ENCODE measurements at regions of chr4 and their contacts with region 1.

Region 1: DNA sequence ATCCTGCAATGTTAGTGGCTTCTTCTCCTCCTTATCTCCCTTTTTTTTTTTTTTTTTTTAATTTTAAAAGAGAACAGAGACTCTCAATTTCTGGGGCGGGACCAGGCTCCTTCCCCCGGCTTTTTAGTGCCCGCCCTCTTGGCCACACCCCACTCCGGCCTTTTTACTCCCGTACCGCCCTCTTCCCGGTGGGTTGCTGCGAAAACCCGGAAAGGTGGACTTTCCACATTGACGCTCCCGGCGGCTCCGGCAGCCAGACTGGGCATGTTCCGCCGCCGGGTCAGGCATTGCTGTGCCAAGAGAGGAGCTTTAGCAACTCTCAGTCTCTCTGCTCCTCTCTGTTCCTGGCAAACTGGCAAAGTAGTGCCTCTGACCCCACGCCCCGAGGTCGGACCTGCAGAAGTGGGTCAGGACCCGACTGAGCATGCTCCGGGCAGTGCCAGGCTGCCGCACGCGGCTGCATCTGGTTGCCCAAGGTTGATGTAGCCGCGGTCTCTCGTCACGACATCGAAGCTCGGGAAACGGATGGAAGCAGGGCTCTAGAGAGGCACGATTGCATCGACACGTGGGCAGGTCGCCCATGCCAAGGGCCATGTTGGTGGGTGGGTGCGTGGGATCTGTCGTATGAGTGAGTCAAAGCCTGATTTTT is 1.1 kb upstream of the MFAP3L start:
- DNase-seq: peak; percentile 94
- ATAC-seq: peak; percentile 77
- H3K4me3 Mint-ChIP-seq: peak overlapping the region; percentile 71
- H3K27ac Mint-ChIP-seq: peak overlapping the region; percentile 69
- H3K4me1 Mint-ChIP-seq: peaks cover 10% of the 10 kb centered on the region
- H3K27me3 Mint-ChIP-seq: peaks cover 15% of the 10 kb centered on the region

Region 2: DNA sequence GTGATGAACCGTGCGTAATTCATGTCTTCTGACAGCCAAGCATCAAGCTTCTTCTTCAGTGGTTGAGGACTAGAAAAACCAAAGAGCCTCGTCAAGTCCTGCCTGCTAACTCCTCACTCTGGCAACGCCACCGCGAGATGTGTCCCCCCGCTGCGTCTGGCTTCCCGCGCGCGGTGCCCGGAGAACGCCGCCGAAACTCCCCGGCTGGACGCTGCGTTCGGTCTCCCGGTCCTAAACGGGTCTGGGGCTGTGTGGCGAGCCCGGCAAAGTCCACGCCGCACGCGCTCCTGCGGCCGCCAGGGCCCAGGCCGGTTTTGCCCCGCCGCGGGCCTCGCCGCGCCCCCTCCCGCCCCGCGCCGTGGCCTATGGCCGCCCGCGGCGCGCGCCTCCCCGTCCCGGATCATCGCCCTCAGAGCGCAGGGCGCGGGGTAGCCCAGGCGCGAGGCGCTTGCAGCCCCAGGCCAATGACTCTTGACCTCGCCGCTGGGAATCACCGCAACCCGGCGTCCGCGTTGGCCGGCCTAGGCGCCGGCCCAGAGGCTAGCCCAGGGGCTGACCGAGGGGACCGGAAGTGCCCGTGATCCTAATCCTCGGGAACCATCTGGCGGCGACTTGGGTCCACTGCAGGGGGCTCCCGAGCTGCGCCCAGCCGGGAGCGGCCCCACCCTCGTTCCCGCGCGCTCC is 62.5 kb after region 1 on chr4 and contains the start of gene AADAT:
- CTCF ChIA-PET with region 1: no interaction called
- POLR2A ChIA-PET with region 1: no interaction called
- intact Hi-C with region 1: loop called in 1 of 2 experiments (anchors 2 kb)
- DNase-seq: peak; percentile 60
- ATAC-seq: peak; percentile 85
- H3K4me3 Mint-ChIP-seq: peak within 1 kb of the TSS; percentile 58
- H3K27ac Mint-ChIP-seq: no peak within 1 kb of the TSS
- H3K4me1 Mint-ChIP-seq: peaks cover 9% of the 10 kb centered on the region
- H3K27me3 Mint-ChIP-seq: peaks cover 35% of the 10 kb centered on the region
- total RNA-seq, gene AADAT: not detected

Region 3: DNA sequence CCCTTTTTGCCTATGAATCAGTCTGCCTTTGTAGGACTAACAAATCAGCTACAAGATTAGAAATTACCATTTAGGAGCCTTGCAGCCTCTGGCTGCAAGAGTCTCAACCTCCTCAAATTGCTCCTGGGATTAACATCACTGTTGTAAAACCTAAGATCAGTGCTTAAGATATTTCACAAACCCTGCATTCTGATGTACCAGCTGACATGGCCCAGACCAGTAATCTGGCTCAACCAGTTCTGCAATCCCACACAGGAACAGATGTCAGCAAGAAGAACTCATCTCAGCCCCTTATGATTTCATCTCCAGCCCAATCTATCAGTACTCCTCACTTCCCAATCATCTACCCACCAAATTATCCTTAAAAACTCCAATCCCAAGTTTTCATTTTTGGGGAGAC is 94.9 kb after region 1 on chr4:
- CTCF ChIA-PET with region 1: no interaction called
- POLR2A ChIA-PET with region 1: no interaction called
- intact Hi-C with region 1: no loop called
- DNase-seq: no peak
- ATAC-seq: no peak
- H3K4me3 Mint-ChIP-seq: no peak overlapping the region
- H3K27ac Mint-ChIP-seq: no peak overlapping the region
- H3K4me1 Mint-ChIP-seq: no peaks in the 10 kb centered on the region
- H3K27me3 Mint-ChIP-seq: peaks cover 9% of the 10 kb centered on the region

Measured in activated CD4-positive, alpha-beta T cell treated with anti-CD3 and anti-CD28 coated beads for 36 hours (primary cell).